ENCODE measurements at regions of chr16 and their contacts with region 1.

Region 1: GRCh38 chr16:84116720-84117493 is at the start of gene MBTPS1:
- DNase-seq: peak; percentile 98
- H3K4me3 Mint-ChIP-seq: peak within 1 kb of the TSS; percentile 89
- H3K27ac Mint-ChIP-seq: peak within 1 kb of the TSS; percentile 90
- H3K4me1 Mint-ChIP-seq: no peaks in the 10 kb centered on the region
- H3K27me3 Mint-ChIP-seq: no peaks in the 10 kb centered on the region
- CTCF ChIP-seq: no peak
- total RNA-seq, gene MBTPS1: 63.6 and 75.1 TPM in 2 replicates

Region 2: DNA sequence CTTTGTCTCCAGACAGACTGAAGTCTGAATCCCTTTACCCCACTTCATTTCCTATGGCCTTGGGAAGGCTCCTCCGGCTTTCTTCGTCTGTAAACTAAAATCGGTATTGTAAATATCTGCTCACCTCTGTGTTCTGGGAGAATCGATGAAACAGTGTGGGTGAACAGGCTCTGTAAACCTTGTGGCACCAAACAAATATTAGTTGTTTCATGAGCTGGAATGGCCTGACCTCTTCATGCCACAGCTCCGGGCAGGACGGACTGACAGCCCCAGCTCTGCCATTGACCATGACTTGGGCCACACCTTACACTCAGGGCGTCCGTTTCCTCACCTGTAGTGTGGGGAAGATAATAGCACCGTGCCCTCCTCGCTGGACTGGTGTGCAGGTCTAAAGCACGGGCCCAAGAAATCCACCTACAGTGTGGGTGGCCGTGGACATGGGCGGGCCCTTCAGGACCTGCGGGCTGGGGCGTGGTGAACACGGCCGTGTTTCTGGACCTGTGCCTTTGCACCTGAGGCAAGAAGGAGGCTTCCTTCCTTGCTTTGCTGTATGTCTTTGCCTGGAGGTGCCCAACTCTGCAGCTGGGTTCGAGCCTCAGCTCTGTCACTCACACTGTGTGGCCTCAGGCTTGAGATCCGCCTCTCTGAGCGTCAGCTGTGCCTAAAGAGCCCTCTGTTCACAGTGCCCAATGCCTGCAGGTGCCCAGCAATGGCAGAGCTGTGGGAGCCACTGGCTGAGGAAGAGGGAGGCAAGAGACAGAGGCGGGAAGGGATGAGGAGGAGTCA is 169.9 kb before region 1 on chr16:
- CTCF ChIA-PET with region 1: no interaction called
- POLR2A ChIA-PET with region 1: no interaction called
- intact Hi-C with region 1: no loop called
- DNase-seq: no peak
- H3K4me3 Mint-ChIP-seq: no peak overlapping the region
- H3K27ac Mint-ChIP-seq: no peak overlapping the region
- H3K4me1 Mint-ChIP-seq: no peaks in the 10 kb centered on the region
- H3K27me3 Mint-ChIP-seq: no peaks in the 10 kb centered on the region
- CTCF ChIP-seq: no peak

Region 3: GRCh38 chr16:84096115-84097012 is 20.5 kb before region 1 on chr16:
- CTCF ChIA-PET with region 1: interaction called, 20 read pairs
- POLR2A ChIA-PET with region 1: interaction called, 120 read pairs
- intact Hi-C with region 1: no loop called
- DNase-seq: no peak
- H3K4me3 Mint-ChIP-seq: no peak overlapping the region
- H3K27ac Mint-ChIP-seq: no peak overlapping the region
- H3K4me1 Mint-ChIP-seq: no peaks in the 10 kb centered on the region
- H3K27me3 Mint-ChIP-seq: no peaks in the 10 kb centered on the region
- CTCF ChIP-seq: no peak

Region 4: DNA sequence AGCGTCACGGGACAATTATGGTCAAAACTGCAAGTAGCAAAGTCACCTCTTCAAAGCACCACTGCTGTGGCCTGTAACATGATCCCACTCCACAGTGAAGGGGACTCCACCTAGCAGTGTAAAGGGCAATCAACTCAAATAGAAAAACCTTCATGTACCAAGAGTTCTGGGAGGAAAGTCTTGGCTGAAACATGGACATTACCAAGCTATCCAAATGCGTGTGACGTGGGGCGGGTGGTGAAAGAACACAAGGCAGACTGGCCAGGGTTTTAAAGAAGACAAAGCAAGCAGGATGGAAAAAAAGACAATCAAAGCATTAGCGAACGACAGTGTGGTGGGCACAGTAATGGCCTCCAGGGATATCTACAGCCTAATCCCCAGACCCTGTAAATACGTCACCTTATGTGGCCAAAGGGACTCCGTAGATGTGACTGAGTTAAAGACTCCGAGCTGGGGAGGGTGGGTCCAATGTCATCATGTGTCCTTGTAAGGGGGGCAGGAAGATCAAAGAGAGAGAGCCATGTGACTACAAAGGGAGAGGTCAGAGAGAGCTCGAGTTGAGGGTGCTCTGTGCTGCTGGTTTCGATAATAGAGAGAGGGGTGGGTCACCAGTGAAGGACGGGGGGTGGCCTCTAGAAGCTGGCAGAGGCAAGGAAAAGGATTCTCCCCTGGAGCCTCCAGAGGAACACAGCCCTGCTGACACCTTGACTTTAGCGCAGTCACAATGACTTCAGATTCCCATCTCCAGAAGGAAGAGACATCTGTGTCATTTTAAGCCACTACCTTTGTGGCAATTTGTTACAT is 22.1 kb after region 1 on chr16:
- CTCF ChIA-PET with region 1: interaction called, 7 read pairs
- POLR2A ChIA-PET with region 1: interaction called, 24 read pairs
- intact Hi-C with region 1: no loop called
- DNase-seq: no peak
- H3K4me3 Mint-ChIP-seq: no peak overlapping the region
- H3K27ac Mint-ChIP-seq: no peak overlapping the region
- H3K4me1 Mint-ChIP-seq: peaks cover 9% of the 10 kb centered on the region
- H3K27me3 Mint-ChIP-seq: no peaks in the 10 kb centered on the region
- CTCF ChIP-seq: no peak

Region 5: DNA sequence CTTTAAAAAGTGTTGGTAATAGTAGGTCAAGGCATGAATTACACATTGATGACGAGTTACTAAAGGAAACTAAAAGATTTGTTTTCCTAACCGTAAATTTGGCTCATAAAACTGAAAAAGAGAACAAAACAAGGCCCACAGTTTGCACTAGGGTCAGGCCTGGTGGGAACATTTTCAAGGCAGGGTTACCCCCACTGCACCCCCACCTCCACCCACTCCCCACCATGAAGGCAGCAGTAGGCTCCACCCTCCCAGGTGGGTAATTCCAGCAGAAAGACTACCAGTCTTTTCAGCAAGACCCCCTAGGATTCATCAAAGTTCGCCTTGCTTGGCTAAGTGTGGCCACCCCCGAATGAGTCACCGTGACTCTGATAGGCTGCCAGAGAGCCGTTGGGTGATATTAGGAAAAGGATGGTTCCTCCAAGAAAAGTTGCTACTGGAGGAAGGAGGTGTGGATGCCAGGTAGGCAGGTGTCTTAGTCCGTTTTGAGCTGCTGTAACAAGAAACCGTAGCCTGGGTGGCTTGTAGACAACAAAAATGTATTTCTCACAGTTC is 36.8 kb after region 1 on chr16:
- CTCF ChIA-PET with region 1: interaction called, 4 read pairs
- POLR2A ChIA-PET with region 1: interaction called, 11 read pairs
- intact Hi-C with region 1: no loop called
- DNase-seq: no peak
- H3K4me3 Mint-ChIP-seq: no peak overlapping the region
- H3K27ac Mint-ChIP-seq: no peak overlapping the region
- H3K4me1 Mint-ChIP-seq: no peaks in the 10 kb centered on the region
- H3K27me3 Mint-ChIP-seq: peaks cover 5% of the 10 kb centered on the region
- CTCF ChIP-seq: no peak

Region 6: GRCh38 chr16:84186685-84187437 is 70.0 kb after region 1 on chr16 and contains the start of gene TAF1C:
- CTCF ChIA-PET with region 1: interaction called, 13 read pairs
- POLR2A ChIA-PET with region 1: interaction called, 37 read pairs
- intact Hi-C with region 1: no loop called
- DNase-seq: peak; percentile 92
- H3K4me3 Mint-ChIP-seq: peak within 1 kb of the TSS; percentile 87
- H3K27ac Mint-ChIP-seq: peak within 1 kb of the TSS; percentile 69
- H3K4me1 Mint-ChIP-seq: peaks cover 14% of the 10 kb centered on the region
- H3K27me3 Mint-ChIP-seq: no peaks in the 10 kb centered on the region
- CTCF ChIP-seq: peak; percentile 89
- total RNA-seq, gene TAF1C: 29.3 and 35.1 TPM in 2 replicates

Region 7: GRCh38 chr16:84970447-84971127 is 853.7 kb after region 1 on chr16:
- CTCF ChIA-PET with region 1: no interaction called
- POLR2A ChIA-PET with region 1: no interaction called
- intact Hi-C with region 1: no loop called
- DNase-seq: peak; percentile 76
- H3K4me3 Mint-ChIP-seq: no peak overlapping the region
- H3K27ac Mint-ChIP-seq: no peak overlapping the region
- H3K4me1 Mint-ChIP-seq: no peaks in the 10 kb centered on the region
- H3K27me3 Mint-ChIP-seq: peaks cover 5% of the 10 kb centered on the region
- CTCF ChIP-seq: peak; percentile 90